Stomach (tissue), 19 donors: ENCODE measurements at regions of chr21 and their contacts with region 1.

Region 1: GRCh38 chr21:31098576-31099005 is 60.3 kb upstream of the KRTAP19-8 start:
- DNase-seq: peak; percentile 72 to 86
- H3K4me3 ChIP-seq: no peak overlapping the region
- H3K27ac ChIP-seq: no peak overlapping the region
- H3K4me1 ChIP-seq: peaks cover 0 to 6% (median 0%) of the 10 kb centered on the region in 4 donors
- H3K27me3 ChIP-seq: peaks cover 0 to 16% (median 0%) of the 10 kb centered on the region in 3 donors
- CTCF ChIP-seq: peak in 5 of 7 experiments; percentile 59 to 83 (median 75)
- EP300 ChIP-seq: no peak
- POLR2A ChIP-seq: no peak

Region 2: GRCh38 chr21:30676737-30677136 is 421.9 kb before region 1 on chr21:
- intact Hi-C with region 1: no loop called
- DNase-seq: no peak
- H3K4me3 ChIP-seq: no peak overlapping the region
- H3K27ac ChIP-seq: no peak overlapping the region
- H3K4me1 ChIP-seq: no peaks in the 10 kb centered on the region
- H3K27me3 ChIP-seq: no peaks in the 10 kb centered on the region
- CTCF ChIP-seq: no peak
- EP300 ChIP-seq: no peak
- POLR2A ChIP-seq: no peak

Region 3: DNA sequence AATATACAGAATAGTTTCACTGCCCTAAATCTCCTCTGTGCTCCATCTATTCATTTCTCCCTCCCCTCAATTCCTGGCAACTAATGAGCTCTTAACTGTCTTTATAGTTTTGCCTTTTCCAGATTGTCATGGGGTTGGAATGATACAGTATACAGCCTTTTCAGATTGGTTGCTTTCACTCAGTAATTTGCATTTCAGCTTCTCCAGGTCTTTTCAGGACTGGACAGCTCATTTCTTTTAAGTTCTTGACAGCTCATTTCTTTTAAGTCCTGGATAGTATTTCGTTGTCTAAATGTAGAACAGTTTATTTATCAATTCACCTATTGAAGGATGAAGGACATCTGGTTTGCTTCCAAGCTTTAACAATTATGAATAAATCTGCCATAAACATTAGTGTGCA is 402.6 kb before region 1 on chr21:
- intact Hi-C with region 1: no loop called
- DNase-seq: no peak
- H3K4me3 ChIP-seq: no peak overlapping the region
- H3K27ac ChIP-seq: no peak overlapping the region
- H3K4me1 ChIP-seq: no peaks in the 10 kb centered on the region
- H3K27me3 ChIP-seq: no peaks in the 10 kb centered on the region
- CTCF ChIP-seq: no peak
- EP300 ChIP-seq: no peak
- POLR2A ChIP-seq: no peak

Region 4: DNA sequence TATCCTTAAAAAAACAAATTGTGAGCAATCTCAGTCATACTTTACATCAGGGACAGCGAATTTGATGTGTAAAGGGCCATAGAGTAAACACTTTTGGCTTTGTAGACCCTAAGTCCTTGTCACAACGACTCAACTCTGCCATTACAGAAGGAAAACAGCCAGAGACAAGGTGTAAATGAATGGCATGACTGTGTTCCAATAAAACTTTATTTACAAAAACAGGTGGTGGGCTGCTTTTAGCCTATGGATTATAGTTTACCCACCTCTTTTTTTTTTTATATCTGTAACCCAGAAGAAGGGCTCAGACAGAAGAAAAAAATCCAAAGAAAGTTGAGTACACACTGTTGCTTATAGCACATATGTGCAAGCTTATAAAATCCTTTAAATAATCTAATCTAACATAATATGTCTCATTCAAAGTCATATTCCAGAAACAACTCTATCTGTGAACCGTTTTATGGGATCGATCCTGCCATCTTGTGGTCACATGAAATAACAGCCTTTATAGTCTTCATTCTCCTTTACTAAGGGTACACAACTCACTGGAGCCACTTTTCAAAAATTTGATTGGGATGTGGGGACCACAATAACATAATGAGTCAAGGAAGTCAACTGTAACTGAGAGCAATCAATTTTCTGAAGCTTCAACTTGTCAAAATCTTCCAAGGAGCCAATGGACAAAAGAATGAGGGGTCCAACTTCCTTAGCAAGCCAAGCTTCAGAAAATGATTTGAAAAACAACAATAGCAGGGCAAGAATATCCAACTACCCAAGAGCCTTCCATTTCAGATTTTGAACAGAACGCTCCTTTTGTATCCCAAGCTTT is 81.9 kb after region 1 on chr21:
- intact Hi-C with region 1: loop called (anchors 5 kb)
- DNase-seq: peak in 1 of 2 donors; percentile 77
- H3K4me3 ChIP-seq: no peak overlapping the region
- H3K27ac ChIP-seq: no peak overlapping the region
- H3K4me1 ChIP-seq: peaks cover 0 to under 1% (median 0%) of the 10 kb centered on the region in 4 donors
- H3K27me3 ChIP-seq: no peaks in the 10 kb centered on the region
- CTCF ChIP-seq: peak in 4 of 7 experiments; percentile 16 to 42 (median 30)
- EP300 ChIP-seq: no peak
- POLR2A ChIP-seq: no peak

Region 5: DNA sequence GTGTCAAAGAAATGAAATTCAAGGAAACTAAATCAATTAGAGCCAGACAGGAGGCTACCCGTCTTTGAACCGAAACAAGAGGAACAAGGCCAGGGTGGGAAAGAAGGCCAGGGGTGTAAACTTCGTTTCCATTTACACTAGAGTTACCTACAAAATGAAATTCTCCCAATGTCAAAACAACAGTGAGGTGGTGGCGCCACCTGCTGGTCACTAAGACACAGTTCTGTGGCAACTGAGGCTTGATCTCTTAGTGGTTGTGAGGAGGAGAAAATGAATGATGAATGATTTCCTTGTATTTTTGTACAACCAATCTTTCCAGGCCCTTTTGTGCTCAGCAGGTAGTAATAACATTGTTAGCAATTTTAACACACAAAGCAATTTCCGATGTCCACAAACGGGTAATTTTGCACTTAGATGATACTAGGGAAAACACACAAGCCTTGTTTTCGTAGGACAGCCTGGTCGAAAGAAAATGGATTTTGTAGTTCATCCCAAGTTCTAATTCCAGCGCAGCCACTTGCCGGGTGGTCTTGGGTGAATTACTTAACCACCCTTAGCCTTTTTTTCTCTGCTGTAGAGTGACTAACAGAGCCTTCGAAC is 506.1 kb after region 1 on chr21:
- intact Hi-C with region 1: loop called (anchors 5 kb)
- DNase-seq: peak; percentile 78 to 90
- H3K4me3 ChIP-seq: no peak overlapping the region
- H3K27ac ChIP-seq: no peak overlapping the region
- H3K4me1 ChIP-seq: no peaks in the 10 kb centered on the region
- H3K27me3 ChIP-seq: no peaks in the 10 kb centered on the region
- CTCF ChIP-seq: peak in 5 of 7 experiments; percentile 71 to 91 (median 82)
- EP300 ChIP-seq: no peak
- POLR2A ChIP-seq: no peak